Mammary epithelial cell (primary cell): ENCODE measurements at regions of chr16 and their contacts with region 1.

Region 1: GRCh38 chr16:12340151-12340733 is 363.7 kb downstream of the SNX29 start:
- DNase-seq: peak; percentile 59
- H3K4me3 ChIP-seq: no peak overlapping the region
- H3K27ac ChIP-seq: no peak overlapping the region
- H3K4me1 ChIP-seq: peaks cover 8% of the 10 kb centered on the region
- H3K27me3 ChIP-seq: no peaks in the 10 kb centered on the region
- CTCF ChIP-seq: peak; percentile 39 to 57

Region 2: GRCh38 chr16:12095275-12096156 is 244.7 kb before region 1 on chr16:
- CTCF ChIA-PET with region 1: interaction called, 5 read pairs
- dilution Hi-C with region 1: no loop called
- in situ Hi-C with region 1: no loop called
- intact Hi-C with region 1: loop called (anchors 1 kb)
- DNase-seq: peak; percentile 10
- H3K4me3 ChIP-seq: no peak overlapping the region
- H3K27ac ChIP-seq: no peak overlapping the region
- H3K4me1 ChIP-seq: no peaks in the 10 kb centered on the region
- H3K27me3 ChIP-seq: no peaks in the 10 kb centered on the region
- CTCF ChIP-seq: peak; percentile 87

Region 3: DNA sequence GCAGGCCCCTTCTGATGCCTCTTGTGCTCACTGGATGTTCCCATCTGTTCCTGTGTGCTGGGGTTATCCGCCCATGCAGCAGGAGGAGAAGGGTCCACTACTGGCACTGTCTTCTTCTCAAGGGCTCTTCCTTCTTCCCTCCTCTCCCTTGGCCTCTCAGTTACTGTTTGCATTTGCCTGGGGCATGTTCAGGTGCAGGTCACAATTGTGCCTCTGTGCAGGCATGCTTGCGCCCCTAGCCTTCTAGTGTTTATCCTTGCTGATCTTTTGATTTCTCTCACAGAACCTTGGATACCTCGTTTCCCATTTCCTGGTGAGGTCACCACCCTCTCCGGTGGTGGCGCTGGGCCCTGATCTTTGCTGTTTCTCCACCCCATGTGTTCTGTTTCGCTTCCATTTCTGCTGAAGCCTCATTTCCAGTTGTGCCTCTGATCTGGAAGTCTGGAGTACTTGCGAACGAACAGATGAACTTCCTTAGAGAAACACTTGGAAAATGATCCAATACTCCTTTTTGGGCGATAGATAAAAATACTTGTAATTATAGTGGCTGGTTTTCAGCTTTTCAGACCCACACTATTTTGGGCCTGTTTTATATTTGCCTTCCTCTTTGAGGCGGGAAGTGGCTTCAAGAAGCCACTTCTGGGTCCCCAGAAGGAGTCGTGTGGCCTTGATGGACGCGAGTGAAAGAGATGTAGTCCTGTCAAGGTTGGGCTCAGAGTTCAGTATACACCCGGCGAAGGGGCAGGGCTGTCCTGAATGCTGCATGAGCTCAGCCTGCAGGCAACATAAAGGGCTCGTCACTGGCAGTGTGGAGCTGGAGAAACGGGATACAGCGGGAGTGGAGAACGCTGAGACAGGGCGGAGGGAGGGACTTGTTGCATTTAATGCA is 50.8 kb before region 1 on chr16:
- CTCF ChIA-PET with region 1: no interaction called
- dilution Hi-C with region 1: no loop called
- in situ Hi-C with region 1: no loop called
- intact Hi-C with region 1: no loop called
- DNase-seq: no peak
- H3K4me3 ChIP-seq: no peak overlapping the region
- H3K27ac ChIP-seq: no peak overlapping the region
- H3K4me1 ChIP-seq: no peaks in the 10 kb centered on the region
- H3K27me3 ChIP-seq: no peaks in the 10 kb centered on the region
- CTCF ChIP-seq: no peak

Region 4: DNA sequence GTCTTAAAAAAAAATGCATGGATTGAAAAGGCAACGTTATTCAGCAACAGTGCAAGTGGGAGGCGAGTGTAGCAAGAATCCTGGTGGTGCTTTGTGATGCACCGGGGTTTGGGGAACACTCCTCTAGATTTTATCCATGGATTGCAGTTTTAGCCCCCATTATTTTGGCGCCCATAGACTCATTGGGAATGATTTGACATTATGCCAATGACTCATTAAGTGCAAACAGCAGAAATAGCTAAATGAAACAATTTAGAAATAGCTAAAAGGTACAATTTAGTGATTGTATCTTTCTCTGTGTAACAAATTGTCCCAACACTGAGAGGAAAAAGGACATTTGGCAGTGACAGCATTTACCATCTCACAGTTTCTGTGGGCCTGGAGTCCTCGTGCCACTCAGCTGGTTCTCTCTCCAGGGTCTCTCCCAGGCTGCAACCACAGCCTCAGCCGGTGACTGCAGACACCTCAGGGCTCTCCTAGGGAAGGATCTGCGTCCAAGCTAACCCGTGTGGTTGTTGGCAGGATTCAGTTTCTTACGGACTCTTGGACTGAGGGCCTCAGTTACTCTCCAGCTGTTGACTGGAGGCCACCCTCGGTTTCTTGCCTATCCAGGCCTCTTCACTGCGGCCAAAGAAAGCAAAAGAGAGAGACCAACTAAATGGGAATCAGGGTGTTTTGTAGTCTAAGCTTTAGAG is 35.0 kb after region 1 on chr16:
- CTCF ChIA-PET with region 1: no interaction called
- dilution Hi-C with region 1: loop called (anchors 5 kb)
- in situ Hi-C with region 1: no loop called
- intact Hi-C with region 1: no loop called
- DNase-seq: no peak
- H3K4me3 ChIP-seq: no peak overlapping the region
- H3K27ac ChIP-seq: no peak overlapping the region
- H3K4me1 ChIP-seq: no peaks in the 10 kb centered on the region
- H3K27me3 ChIP-seq: no peaks in the 10 kb centered on the region
- CTCF ChIP-seq: no peak